ENCODE measurements at regions of chr19 and their contacts with region 1.

Region 1: DNA sequence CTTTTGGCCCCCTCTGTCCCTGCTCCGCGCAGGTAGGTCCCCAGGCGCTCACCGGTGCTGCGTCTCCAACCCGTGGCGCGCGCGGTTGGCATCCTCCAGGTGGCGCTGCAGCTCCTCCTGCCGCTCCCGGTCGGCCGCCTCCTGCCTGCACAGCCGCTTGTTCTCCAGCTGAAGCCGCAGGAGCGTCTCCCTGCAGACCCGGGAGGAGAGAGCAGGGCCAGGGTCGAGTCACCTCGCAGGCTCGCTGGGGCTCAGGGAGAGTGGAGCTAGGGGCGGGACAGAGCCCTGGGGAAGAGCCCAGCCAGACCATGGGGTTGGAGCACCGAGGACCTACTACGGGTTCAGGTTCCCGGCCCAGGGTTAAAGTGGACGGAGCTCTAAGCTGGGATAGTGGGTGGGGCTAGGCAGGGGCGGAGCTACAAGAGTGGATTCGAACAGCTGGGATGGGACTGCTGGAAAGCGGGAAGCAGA is 9.3 kb downstream of the HOOK2 start:
- DNase-seq: peak; percentile 82 to 84
- ATAC-seq: peak; percentile 97
- H3K4me3 ChIP-seq: peak overlapping the region; percentile 40
- H3K27ac ChIP-seq: peak overlapping the region; percentile 48 to 87; a peak in 5 of 6 replicates
- H3K4me1 ChIP-seq: no peaks in the 10 kb centered on the region
- CTCF ChIP-seq: peak; percentile 78
- EP300 ChIP-seq: no peak
- POLR2A ChIP-seq: peak; percentile 23; the same call in 1 of the 2 replicates
- RAD21 ChIP-seq: peak; percentile 69 to 80

Region 2: DNA sequence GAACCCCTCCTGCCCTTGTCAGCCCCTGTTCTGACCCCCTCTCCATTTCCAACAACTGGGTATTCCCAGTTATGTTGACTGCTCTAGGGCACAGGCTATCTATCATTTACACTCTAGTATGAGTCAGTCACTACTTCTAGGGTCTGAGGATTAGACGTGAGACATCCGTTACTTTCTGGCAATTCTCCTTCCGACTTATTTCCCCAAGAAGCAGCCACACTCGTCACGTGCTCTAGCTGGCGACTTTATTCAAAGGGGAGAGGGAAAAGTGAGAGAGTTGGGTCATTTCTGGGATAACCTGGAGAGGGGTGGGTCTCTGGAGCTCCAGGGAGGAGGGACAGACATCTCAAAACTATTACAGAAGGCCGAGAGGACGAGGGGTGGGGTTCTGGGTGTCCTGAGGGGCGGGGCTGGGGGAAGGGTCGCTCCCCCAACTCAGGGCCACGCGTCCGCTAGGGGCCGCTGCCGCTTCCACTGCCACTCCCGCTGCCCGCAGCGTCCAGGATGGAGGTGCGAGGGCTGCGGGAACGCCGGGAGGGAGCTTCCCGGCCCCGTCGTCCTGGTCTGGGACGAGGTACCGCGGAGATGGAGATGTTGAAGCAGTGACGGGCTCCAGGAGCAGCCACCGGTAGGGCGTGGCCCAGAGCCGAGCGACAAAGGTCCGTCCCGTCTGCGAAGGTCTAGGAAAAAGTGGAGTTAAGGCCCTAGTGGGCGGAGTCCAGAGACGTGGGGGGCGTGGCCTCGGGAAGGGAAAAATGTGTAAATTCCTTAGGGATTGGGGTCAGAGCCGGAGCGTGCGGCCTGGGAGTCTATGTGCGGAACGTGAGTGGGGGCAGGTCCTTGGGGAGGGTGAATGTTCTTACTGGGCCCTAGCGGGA is 59.4 kb after region 1 on chr19:
- CTCF ChIA-PET with region 1: interaction called, 23 read pairs
- POLR2A ChIA-PET with region 1: no interaction called
- DNase-seq: peak in 1 of 2 experiments; percentile 57
- ATAC-seq: peak; percentile 72 to 86
- H3K4me3 ChIP-seq: peak overlapping the region; percentile 27; the same call in 2 of the 3 replicates
- H3K27ac ChIP-seq: no peak overlapping the region
- H3K4me1 ChIP-seq: no peaks in the 10 kb centered on the region
- CTCF ChIP-seq: peak; percentile 38
- EP300 ChIP-seq: no peak
- POLR2A ChIP-seq: no peak
- RAD21 ChIP-seq: no peak

Region 3: GRCh38 chr19:12884926-12885748 is 119.1 kb after region 1 on chr19:
- CTCF ChIA-PET with region 1: interaction called, 17 read pairs
- POLR2A ChIA-PET with region 1: no interaction called
- DNase-seq: peak; percentile 54 to 74
- ATAC-seq: peak; percentile 71 to 78
- H3K4me3 ChIP-seq: peak overlapping the region; percentile 36
- H3K27ac ChIP-seq: peak overlapping the region in 1 of 2 experiments; percentile 83; a peak in 4 of 6 replicates
- H3K4me1 ChIP-seq: no peaks in the 10 kb centered on the region
- CTCF ChIP-seq: peak; percentile 68
- EP300 ChIP-seq: no peak
- POLR2A ChIP-seq: no peak
- RAD21 ChIP-seq: peak; percentile 16 to 47; a peak in 3 of 5 replicates

Measured in A549 (cell line).